MCF 10A (cell line): ENCODE measurements at regions of chr2 and their contacts with region 1.

Region 1: GRCh38 chr2:85750587-85751575 is 2.9 kb upstream of the ATOH8 start:
- DNase-seq: peak; percentile 73
- H3K4me3 Mint-ChIP-seq: no peak overlapping the region
- H3K27ac Mint-ChIP-seq: no peak overlapping the region
- H3K4me1 Mint-ChIP-seq: peaks cover 9% of the 10 kb centered on the region
- H3K27me3 Mint-ChIP-seq: peaks cover 66% of the 10 kb centered on the region
- CTCF ChIP-seq: peak; percentile 83

Region 2: GRCh38 chr2:85694052-85695025 is 56.5 kb before region 1 on chr2 and contains the start of gene GNLY:
- CTCF ChIA-PET with region 1: no interaction called
- POLR2A ChIA-PET with region 1: no interaction called
- intact Hi-C with region 1: no loop called
- DNase-seq: no peak
- H3K4me3 Mint-ChIP-seq: no peak within 1 kb of the TSS
- H3K27ac Mint-ChIP-seq: no peak within 1 kb of the TSS
- H3K4me1 Mint-ChIP-seq: peaks cover 6% of the 10 kb centered on the region
- H3K27me3 Mint-ChIP-seq: no peaks in the 10 kb centered on the region
- CTCF ChIP-seq: no peak
- total RNA-seq, gene GNLY: not detected in 2 replicates

Region 3: GRCh38 chr2:85777441-85777861 is 26.6 kb after region 1 on chr2:
- CTCF ChIA-PET with region 1: interaction called, 25 read pairs
- POLR2A ChIA-PET with region 1: interaction called, 7 read pairs
- intact Hi-C with region 1: no loop called
- DNase-seq: no peak
- H3K4me3 Mint-ChIP-seq: no peak overlapping the region
- H3K27ac Mint-ChIP-seq: no peak overlapping the region
- H3K4me1 Mint-ChIP-seq: peaks cover 25% of the 10 kb centered on the region
- H3K27me3 Mint-ChIP-seq: no peaks in the 10 kb centered on the region
- CTCF ChIP-seq: no peak

Region 4: DNA sequence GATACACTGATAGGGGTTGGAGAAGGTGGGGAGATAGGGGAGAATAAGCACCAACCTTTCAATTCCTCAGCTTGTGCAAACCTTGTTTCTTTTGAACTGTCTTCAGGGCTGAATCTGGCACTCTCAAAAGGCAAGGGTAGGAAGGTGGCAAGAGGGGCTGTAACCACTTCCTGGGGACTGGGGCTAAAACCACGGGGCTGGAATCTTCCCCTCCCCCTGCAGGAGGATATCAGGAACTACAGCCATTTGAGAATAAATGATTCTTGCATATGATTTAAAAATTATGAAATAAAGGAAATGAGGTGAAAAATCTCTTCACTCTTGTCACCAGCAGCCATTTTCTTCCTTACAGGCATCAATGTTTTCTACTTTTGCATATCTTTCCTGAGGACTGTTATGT is 53.7 kb after region 1 on chr2:
- CTCF ChIA-PET with region 1: interaction called, 22 read pairs
- POLR2A ChIA-PET with region 1: no interaction called
- intact Hi-C with region 1: loop called (anchors 1 kb)
- DNase-seq: peak; percentile 51
- H3K4me3 Mint-ChIP-seq: no peak overlapping the region
- H3K27ac Mint-ChIP-seq: no peak overlapping the region
- H3K4me1 Mint-ChIP-seq: peaks cover 7% of the 10 kb centered on the region
- H3K27me3 Mint-ChIP-seq: no peaks in the 10 kb centered on the region
- CTCF ChIP-seq: peak; percentile 60